CD4-positive, alpha-beta memory T cell (primary cell): ENCODE measurements at regions of chr5 and their contacts with region 1.

Region 1: DNA sequence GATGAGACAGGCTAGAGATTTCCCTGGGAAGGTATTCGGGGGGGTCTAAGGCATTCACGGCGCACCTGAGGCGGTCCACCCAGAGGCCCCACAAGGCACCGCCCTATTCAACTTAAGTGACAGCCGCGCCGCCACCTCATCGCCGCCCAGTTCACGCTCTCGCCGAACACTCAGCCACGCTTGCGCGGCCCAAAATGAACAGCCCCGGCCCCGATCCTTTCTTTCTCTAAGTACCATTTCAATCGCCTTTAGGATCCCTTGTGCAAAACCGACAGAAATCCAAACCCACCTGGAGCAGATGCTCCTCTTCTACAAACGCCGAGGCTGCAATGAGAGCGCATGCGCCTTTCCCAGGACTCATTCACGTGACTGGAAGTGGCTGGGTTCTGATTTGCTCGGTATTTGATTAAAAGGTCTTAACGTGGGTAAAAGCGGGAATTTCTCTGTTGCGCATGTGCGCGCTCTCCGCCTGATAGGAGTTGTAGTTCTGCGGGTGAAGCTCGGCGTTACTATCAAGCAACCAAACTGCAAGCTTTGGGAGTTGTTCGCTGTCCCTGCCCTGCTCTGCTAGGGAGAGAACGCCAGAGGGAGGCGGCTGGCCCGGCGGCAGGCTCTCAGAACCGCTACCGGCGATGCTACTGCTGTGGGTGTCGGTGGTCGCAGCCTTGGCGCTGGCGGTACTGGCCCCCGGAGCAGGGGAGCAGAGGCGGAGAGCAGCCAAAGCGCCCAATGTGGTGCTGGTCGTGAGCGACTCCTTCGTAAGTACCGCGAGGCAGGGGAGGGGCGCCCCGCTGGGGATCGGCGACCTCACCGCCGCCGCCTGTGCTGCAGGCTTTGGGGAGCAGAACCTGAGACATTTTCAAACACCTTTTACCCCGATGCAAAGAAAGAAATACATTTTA is at the starts of genes ARSK and SKIC3:
- DNase-seq: peak; percentile 95 to 98 (median 97)
- H3K4me3 ChIP-seq: peak within 1 kb of the TSS; percentile 61 to 84
- H3K4me3 Mint-ChIP-seq: peak within 1 kb of the TSS; percentile 92 to 100 (median 98)
- H3K27ac ChIP-seq: peak within 1 kb of the TSS; percentile 70
- H3K27ac Mint-ChIP-seq: peak within 1 kb of the TSS; percentile 89 to 99 (median 96)
- H3K4me1 ChIP-seq: peaks cover 37% of the 10 kb centered on the region
- H3K4me1 Mint-ChIP-seq: peaks cover 32 to 53% (median 42%) of the 10 kb centered on the region in 4 donors
- H3K27me3 ChIP-seq: no peaks in the 10 kb centered on the region
- H3K27me3 Mint-ChIP-seq: no peaks in the 10 kb centered on the region
- total RNA-seq, gene ARSK: 6.8 to 7.4 TPM
- total RNA-seq, gene SKIC3: 94.6 to 99.9 TPM

Region 2: DNA sequence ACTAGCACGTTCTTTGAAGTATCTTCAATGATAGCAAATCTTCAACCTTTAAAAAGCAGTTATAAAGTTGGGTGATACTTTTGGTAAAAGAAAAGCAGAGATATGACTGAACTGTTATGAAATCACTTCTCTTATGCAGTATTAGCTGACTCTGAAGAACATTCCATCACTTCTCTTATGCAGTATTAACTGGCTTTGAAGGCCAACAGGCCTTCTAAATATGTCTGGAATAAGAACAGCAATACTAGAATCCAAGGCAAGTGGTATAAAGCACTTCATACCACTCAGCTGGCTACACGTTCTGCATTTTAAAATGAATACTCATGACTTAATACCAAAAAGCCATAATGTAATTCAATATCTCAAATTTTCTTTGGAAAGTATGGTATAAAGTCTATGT is 17.4 kb before region 1 on chr5:
- CTCF ChIA-PET with region 1: no interaction called
- POLR2A ChIA-PET with region 1: no interaction called
- intact Hi-C with region 1: no loop called
- DNase-seq: no peak
- H3K4me3 ChIP-seq: no peak overlapping the region
- H3K4me3 Mint-ChIP-seq: no peak overlapping the region
- H3K27ac ChIP-seq: no peak overlapping the region
- H3K27ac Mint-ChIP-seq: no peak overlapping the region
- H3K4me1 ChIP-seq: no peaks in the 10 kb centered on the region
- H3K4me1 Mint-ChIP-seq: peaks cover 13 to 19% (median 18%) of the 10 kb centered on the region in 4 donors
- H3K27me3 ChIP-seq: no peaks in the 10 kb centered on the region
- H3K27me3 Mint-ChIP-seq: no peaks in the 10 kb centered on the region

Region 3: GRCh38 chr5:95591490-95591901 is 36.6 kb after region 1 on chr5:
- CTCF ChIA-PET with region 1: no interaction called
- POLR2A ChIA-PET with region 1: no interaction called
- intact Hi-C with region 1: loop called (anchors 5 kb)
- DNase-seq: no peak
- H3K4me3 ChIP-seq: no peak overlapping the region
- H3K4me3 Mint-ChIP-seq: no peak overlapping the region
- H3K27ac ChIP-seq: no peak overlapping the region
- H3K27ac Mint-ChIP-seq: peak overlapping the region in 5 of 7 donors; percentile 13 to 85 (median 68)
- H3K4me1 ChIP-seq: peaks cover 17% of the 10 kb centered on the region
- H3K4me1 Mint-ChIP-seq: peaks cover 16 to 24% (median 20%) of the 10 kb centered on the region in 4 donors
- H3K27me3 ChIP-seq: no peaks in the 10 kb centered on the region
- H3K27me3 Mint-ChIP-seq: no peaks in the 10 kb centered on the region

Region 4: GRCh38 chr5:95631991-95632675 is 77.2 kb after region 1 on chr5:
- CTCF ChIA-PET with region 1: interaction called, 8 read pairs
- POLR2A ChIA-PET with region 1: interaction called, 8 read pairs
- intact Hi-C with region 1: loop called (anchors 1 kb)
- DNase-seq: peak; percentile 74 to 92 (median 84)
- H3K4me3 ChIP-seq: peak overlapping the region in 1 of 2 donors; percentile 5
- H3K4me3 Mint-ChIP-seq: peak overlapping the region; percentile 36 to 80 (median 55)
- H3K27ac ChIP-seq: peak overlapping the region; percentile 56
- H3K27ac Mint-ChIP-seq: peak overlapping the region; percentile 90 to 99 (median 96)
- H3K4me1 ChIP-seq: peaks cover 15% of the 10 kb centered on the region
- H3K4me1 Mint-ChIP-seq: peaks cover 16 to 43% (median 26%) of the 10 kb centered on the region in 4 donors
- H3K27me3 ChIP-seq: no peaks in the 10 kb centered on the region
- H3K27me3 Mint-ChIP-seq: peaks cover 0 to 6% of the 10 kb centered on the region in 2 donors

Region 5: DNA sequence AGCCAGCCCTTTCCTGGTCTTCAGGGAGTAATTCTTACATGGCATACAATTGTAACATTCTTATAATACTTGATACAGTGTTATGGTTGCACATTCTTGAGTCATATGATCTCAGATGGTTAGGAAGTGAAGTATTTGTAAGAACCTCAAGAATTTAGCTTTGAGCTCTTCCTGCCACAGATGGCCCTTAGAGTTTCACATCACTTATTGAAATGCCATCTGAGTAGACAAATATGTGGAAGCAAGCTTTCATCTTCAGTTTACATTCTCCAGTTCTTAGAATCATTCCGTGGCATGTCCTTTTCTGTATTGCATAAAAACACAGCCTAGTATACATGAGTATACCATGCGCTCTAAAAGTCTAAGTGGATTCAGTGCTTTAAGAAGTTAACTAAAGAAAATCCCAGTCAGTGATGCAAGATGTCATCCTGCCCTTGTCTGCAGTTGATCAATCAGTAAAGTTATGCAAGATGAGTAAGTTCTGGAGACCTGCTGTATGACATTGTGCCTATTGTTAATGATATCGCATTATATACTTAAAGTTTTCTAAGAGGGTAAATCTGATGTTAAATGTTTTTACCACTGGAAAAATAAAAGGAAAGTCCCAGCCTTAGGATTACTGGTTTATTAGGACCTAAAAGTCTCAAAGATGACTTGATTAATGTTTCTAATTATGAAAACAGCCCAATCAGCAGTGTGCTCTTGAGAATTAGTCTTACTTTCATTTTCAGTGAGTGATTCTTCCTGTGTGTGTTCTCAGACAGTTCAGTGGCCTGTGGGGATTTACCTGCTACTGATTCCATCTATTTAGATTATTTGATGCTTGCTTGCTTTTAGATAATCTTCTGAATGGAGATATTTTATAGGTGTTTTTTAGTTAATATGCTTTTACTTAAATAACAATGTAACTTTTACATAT is 205.6 kb after region 1 on chr5:
- CTCF ChIA-PET with region 1: no interaction called
- POLR2A ChIA-PET with region 1: no interaction called
- intact Hi-C with region 1: loop called (anchors 1 kb)
- DNase-seq: peak in 4 of 5 donors; percentile 22 to 39 (median 31)
- H3K4me3 ChIP-seq: peak overlapping the region; percentile 43 to 57
- H3K4me3 Mint-ChIP-seq: peak overlapping the region; percentile 79 to 96 (median 87)
- H3K27ac ChIP-seq: peak overlapping the region; percentile 58
- H3K27ac Mint-ChIP-seq: peak overlapping the region; percentile 77 to 94 (median 91)
- H3K4me1 ChIP-seq: peaks cover 27% of the 10 kb centered on the region
- H3K4me1 Mint-ChIP-seq: peaks cover 17 to 33% (median 27%) of the 10 kb centered on the region in 4 donors
- H3K27me3 ChIP-seq: no peaks in the 10 kb centered on the region
- H3K27me3 Mint-ChIP-seq: no peaks in the 10 kb centered on the region

Region 6: GRCh38 chr5:95961617-95962474 is 406.9 kb after region 1 on chr5 and contains the start of gene ELL2:
- CTCF ChIA-PET with region 1: no interaction called
- POLR2A ChIA-PET with region 1: no interaction called
- intact Hi-C with region 1: loop called (anchors 1 kb)
- DNase-seq: peak; percentile 92 to 99 (median 94)
- H3K4me3 ChIP-seq: peak within 1 kb of the TSS; percentile 70 to 81
- H3K4me3 Mint-ChIP-seq: peak within 1 kb of the TSS; percentile 94 to 98 (median 96)
- H3K27ac ChIP-seq: peak within 1 kb of the TSS; percentile 83
- H3K27ac Mint-ChIP-seq: peak within 1 kb of the TSS; percentile 98 to 99 (median 99)
- H3K4me1 ChIP-seq: peaks cover 29% of the 10 kb centered on the region
- H3K4me1 Mint-ChIP-seq: peaks cover 24 to 47% (median 38%) of the 10 kb centered on the region in 4 donors
- H3K27me3 ChIP-seq: no peaks in the 10 kb centered on the region
- H3K27me3 Mint-ChIP-seq: peaks cover 0 to 3% of the 10 kb centered on the region in 2 donors
- total RNA-seq, gene ELL2: 14.0 to 15.6 TPM